ENCODE measurements at regions of chr19 and their contacts with region 1.

Region 1: GRCh38 chr19:39532233-39533002 is at the start of gene EID2B:
- DNase-seq: peak; percentile 94
- ATAC-seq: peak; percentile 96
- H3K4me3 ChIP-seq: peak within 1 kb of the TSS; percentile 98
- H3K27ac ChIP-seq: peak within 1 kb of the TSS; percentile 57
- H3K4me1 ChIP-seq: no peaks in the 10 kb centered on the region
- H3K27me3 ChIP-seq: no peaks in the 10 kb centered on the region
- CTCF ChIP-seq: peak; percentile 100; a peak in 5 of 6 replicates
- EP300 ChIP-seq: no peak
- POLR2A ChIP-seq: peak; percentile 79
- RAD21 ChIP-seq: peak; percentile 88
- polyA plus RNA-seq, gene EID2B: 5.8 to 6.1 TPM

Region 2: GRCh38 chr19:39277612-39278011 is 254.8 kb before region 1 on chr19:
- CTCF ChIA-PET with region 1: no interaction called
- POLR2A ChIA-PET with region 1: no interaction called
- RAD21 ChIA-PET with region 1: no interaction called
- SMC1A ChIA-PET with region 1: no interaction called
- in situ Hi-C with region 1: no loop called
- intact Hi-C with region 1: no loop called
- DNase-seq: no peak
- ATAC-seq: no peak
- H3K4me3 ChIP-seq: no peak overlapping the region
- H3K27ac ChIP-seq: no peak overlapping the region
- H3K4me1 ChIP-seq: no peaks in the 10 kb centered on the region
- H3K27me3 ChIP-seq: peaks cover 0 to 1% of the 10 kb centered on the region in 2 experiments; a peak in 2 of 4 replicates
- CTCF ChIP-seq: no peak
- EP300 ChIP-seq: no peak
- POLR2A ChIP-seq: no peak
- RAD21 ChIP-seq: no peak

Region 3: DNA sequence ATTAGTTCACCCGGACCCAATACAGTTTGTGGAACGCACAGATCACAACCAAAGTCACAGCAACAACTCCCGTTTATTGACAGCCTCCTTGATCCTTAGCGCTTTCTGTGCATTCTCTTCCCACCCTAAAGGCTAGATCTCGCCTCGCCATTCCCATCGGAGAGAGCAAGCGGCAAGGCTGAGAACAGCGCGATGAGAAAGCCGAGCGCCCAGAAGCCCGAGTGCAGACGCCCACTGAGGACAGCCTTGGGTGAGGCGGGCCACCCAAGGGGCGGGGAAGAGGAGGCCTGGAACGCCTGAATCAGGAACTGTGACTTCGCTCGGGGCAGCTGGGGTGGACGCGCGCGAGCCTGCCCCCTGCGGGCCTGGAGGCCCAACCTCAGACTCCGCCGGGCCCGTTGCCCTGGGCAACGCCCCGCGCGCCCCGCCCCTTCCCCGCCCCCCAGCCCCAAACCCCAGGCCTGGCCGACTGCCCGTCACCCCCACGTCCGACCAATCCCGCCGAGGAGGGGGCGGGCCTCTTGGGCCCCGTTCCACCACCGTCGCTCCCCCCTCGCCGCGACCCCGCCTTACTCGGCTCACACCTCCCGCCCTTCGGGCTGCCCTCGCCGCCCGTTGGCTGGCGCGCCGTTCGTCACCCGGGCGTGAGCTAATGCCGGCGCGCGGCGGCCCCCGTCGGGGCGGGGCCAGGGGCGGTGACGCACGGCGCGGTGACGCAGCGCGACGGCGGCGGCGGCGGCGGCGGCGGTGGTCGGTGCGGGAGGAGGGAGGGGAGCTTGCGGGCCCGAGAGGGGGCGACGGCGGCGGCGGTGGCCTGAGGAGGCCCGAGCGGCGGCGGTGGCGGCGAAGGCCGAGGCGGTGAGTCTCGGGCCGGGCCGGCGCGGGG is 190.5 kb before region 1 on chr19 and contains the start of gene SAMD4B:
- CTCF ChIA-PET with region 1: no interaction called
- POLR2A ChIA-PET with region 1: no interaction called
- RAD21 ChIA-PET with region 1: no interaction called
- SMC1A ChIA-PET with region 1: no interaction called
- in situ Hi-C with region 1: no loop called
- intact Hi-C with region 1: loop called (anchors 5 kb)
- DNase-seq: peak; percentile 87
- ATAC-seq: peak; percentile 96
- H3K4me3 ChIP-seq: peak within 1 kb of the TSS; percentile 95
- H3K27ac ChIP-seq: peak within 1 kb of the TSS; percentile 82
- H3K4me1 ChIP-seq: peaks cover 14% of the 10 kb centered on the region
- H3K27me3 ChIP-seq: no peaks in the 10 kb centered on the region
- CTCF ChIP-seq: peak; percentile 57 to 91 (median 65); a peak in 5 of 6 replicates
- EP300 ChIP-seq: no peak
- POLR2A ChIP-seq: peak; percentile 99
- RAD21 ChIP-seq: peak; percentile 2; the same call in 1 of the 2 replicates
- polyA plus RNA-seq, gene SAMD4B: 2.4 to 3.8 TPM

Region 4: DNA sequence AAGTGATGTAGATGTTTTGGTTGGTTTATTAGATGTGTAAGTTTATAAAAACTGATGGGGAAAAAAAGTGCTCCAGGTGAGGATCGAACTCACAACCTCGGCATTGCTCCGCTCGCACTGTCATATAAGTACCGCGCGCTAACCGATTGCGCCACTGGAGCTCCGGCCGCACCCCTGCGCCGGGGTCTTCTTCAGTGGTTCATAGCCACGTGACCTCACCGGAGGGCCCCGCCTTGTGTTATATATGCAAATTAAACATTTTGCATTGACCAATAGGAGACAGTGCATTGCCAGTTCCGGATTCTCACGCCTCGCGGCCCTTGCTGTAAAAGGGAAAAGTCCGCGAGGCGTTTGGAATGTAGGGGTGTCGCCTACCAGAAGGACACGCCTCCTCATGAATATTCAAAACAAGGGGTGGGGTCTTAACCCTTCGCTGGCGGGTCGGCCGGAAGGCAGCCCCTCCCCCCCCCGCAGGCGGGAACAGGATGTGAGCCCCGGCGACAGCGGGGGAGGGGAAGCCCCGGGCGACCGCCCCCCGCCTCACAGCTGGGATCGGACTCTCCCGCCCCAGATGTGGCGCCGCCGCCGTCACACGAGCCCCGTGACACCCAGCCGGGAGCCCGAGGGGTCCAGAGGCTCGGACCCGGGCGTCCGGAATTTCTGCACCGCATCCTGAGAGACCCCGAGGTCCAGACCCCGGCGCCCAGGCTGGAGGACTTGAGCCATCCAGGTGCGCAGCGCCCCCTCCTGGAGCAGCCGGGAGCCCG is 120.1 kb before region 1 on chr19 and contains the start of gene PLEKHG2:
- CTCF ChIA-PET with region 1: interaction called, 6 read pairs
- POLR2A ChIA-PET with region 1: no interaction called
- RAD21 ChIA-PET with region 1: interaction called, 4 read pairs
- SMC1A ChIA-PET with region 1: interaction called, 3 read pairs
- in situ Hi-C with region 1: no loop called
- intact Hi-C with region 1: loop called (anchors 10 kb)
- DNase-seq: peak; percentile 99
- ATAC-seq: peak; percentile 59
- H3K4me3 ChIP-seq: peak within 1 kb of the TSS; percentile 98
- H3K27ac ChIP-seq: peak within 1 kb of the TSS; percentile 100
- H3K4me1 ChIP-seq: peaks cover 15% of the 10 kb centered on the region
- H3K27me3 ChIP-seq: no peaks in the 10 kb centered on the region
- CTCF ChIP-seq: peak in 2 of 3 experiments; percentile 79 to 90
- EP300 ChIP-seq: peak; percentile 26 to 31; a peak in 2 of 4 replicates
- POLR2A ChIP-seq: peak; percentile 87
- RAD21 ChIP-seq: peak; percentile 44
- polyA plus RNA-seq, gene PLEKHG2: 3.0 to 7.2 TPM

Region 5: GRCh38 chr19:39445265-39446111 is 86.9 kb before region 1 on chr19 and contains the start of gene SUPT5H:
- CTCF ChIA-PET with region 1: interaction called, 63 read pairs
- POLR2A ChIA-PET with region 1: interaction called, 5 read pairs
- RAD21 ChIA-PET with region 1: interaction called, 14 read pairs
- SMC1A ChIA-PET with region 1: interaction called, 26 read pairs
- in situ Hi-C with region 1: loop called (anchors 5 kb)
- intact Hi-C with region 1: loop called (anchors 2 kb)
- DNase-seq: peak; percentile 97
- ATAC-seq: peak; percentile 90
- H3K4me3 ChIP-seq: peak within 1 kb of the TSS; percentile 87
- H3K27ac ChIP-seq: peak within 1 kb of the TSS; percentile 95
- H3K4me1 ChIP-seq: peaks cover 28% of the 10 kb centered on the region
- H3K27me3 ChIP-seq: no peaks in the 10 kb centered on the region
- CTCF ChIP-seq: no peak
- EP300 ChIP-seq: peak in 1 of 2 experiments; percentile 25; a peak in 1 of 4 replicates
- POLR2A ChIP-seq: peak; percentile 95
- RAD21 ChIP-seq: no peak
- polyA plus RNA-seq, gene SUPT5H: 27.2 to 75.0 TPM

Region 6: DNA sequence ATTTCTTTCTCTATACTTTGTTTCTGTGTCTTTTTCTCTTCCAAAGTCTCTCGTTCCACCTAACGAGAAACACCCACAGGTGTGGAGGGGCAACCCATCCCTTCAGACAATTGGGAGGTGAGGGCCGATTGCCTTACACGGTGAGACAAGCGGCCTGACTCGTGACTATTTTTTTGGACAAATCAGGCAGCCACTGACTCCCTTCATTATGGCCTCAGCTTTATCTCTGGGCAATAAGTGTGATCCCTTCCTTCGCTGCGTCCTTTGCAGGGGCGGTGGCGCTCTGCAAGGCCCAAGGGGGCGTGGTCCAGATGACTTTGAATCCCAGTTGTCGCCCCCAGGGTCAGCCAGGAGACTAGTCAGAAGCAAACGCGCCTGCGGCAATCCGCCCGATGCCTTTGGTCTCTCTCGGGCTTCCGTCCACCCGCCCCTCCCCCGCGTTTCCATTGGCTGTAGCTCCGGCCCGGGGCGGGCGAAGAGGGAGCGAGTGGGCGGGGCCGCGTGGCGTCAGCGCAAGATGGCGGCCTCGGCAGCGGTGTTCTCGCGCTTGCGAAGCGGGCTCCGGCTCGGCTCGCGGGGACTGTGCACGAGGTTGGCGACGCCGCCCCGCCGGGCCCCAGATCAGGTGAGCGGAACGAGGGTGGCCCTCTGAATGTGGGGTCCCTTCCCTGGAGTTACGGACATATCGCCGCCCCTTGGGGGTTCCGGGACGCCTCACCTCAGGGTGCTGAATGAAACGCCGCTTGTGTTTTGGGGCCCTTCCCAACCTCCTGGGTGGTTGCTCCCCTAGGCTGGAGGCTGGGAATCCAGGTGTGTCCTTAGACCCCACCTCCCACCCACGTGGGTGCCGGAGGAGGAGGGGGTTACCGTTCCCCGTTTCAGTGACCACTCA is 51.8 kb before region 1 on chr19 and contains the start of gene TIMM50:
- CTCF ChIA-PET with region 1: interaction called, 41 read pairs
- POLR2A ChIA-PET with region 1: interaction called, 3 read pairs
- RAD21 ChIA-PET with region 1: interaction called, 3 read pairs
- SMC1A ChIA-PET with region 1: no interaction called
- in situ Hi-C with region 1: loop called (anchors 5 kb)
- intact Hi-C with region 1: no loop called
- DNase-seq: peak; percentile 69
- ATAC-seq: peak; percentile 97
- H3K4me3 ChIP-seq: peak within 1 kb of the TSS; percentile 87
- H3K27ac ChIP-seq: peak within 1 kb of the TSS; percentile 91
- H3K4me1 ChIP-seq: peaks cover 6% of the 10 kb centered on the region
- H3K27me3 ChIP-seq: no peaks in the 10 kb centered on the region
- CTCF ChIP-seq: no peak
- EP300 ChIP-seq: no peak
- POLR2A ChIP-seq: peak; percentile 95
- RAD21 ChIP-seq: no peak
- polyA plus RNA-seq, gene TIMM50: 15.6 to 34.7 TPM

Region 7: DNA sequence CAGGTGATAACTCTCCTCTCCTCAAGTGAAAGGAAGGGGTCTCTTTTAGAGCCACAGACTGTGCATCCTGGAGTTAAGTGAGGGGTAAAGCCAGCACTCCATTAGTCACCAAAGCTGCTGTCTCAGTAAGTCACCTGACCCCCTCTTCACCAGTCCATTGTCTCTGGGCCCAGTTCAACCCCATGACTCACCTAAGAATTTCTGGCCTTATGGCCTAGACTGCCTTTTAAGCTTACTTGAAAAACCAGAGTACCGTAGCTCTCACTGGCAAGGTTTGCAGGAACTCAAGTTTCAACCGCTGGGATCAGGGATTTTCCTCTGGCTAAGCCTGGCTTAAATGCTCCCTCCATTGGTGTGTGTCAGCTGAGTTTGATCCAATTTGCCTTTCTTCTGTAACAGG is 31.0 kb after region 1 on chr19:
- CTCF ChIA-PET with region 1: no interaction called
- POLR2A ChIA-PET with region 1: no interaction called
- RAD21 ChIA-PET with region 1: no interaction called
- SMC1A ChIA-PET with region 1: no interaction called
- in situ Hi-C with region 1: no loop called
- intact Hi-C with region 1: no loop called
- DNase-seq: no peak
- ATAC-seq: no peak
- H3K4me3 ChIP-seq: no peak overlapping the region
- H3K27ac ChIP-seq: no peak overlapping the region
- H3K4me1 ChIP-seq: peaks cover 11% of the 10 kb centered on the region
- H3K27me3 ChIP-seq: no peaks in the 10 kb centered on the region
- CTCF ChIP-seq: no peak
- EP300 ChIP-seq: no peak
- POLR2A ChIP-seq: no peak
- RAD21 ChIP-seq: no peak

Region 8: DNA sequence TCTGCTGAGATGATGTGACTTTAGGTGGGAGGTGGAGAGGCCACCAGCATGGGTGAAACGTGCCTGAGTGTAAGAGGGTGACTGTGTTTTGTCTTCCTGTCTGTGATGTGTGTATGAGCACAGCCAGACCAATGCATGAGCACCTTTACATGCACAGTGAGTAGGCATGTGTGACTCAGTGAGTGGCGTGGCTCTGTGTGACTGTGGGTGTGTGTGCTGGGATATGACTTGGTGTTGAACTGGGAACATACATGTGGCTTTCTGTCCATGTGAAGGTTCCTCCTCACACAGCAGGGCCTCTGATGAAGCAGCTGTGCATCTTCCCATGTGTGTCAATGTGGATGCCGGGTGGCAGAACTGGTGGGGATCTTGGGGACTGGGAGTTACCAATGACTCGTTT is 50.0 kb after region 1 on chr19:
- CTCF ChIA-PET with region 1: no interaction called
- POLR2A ChIA-PET with region 1: no interaction called
- RAD21 ChIA-PET with region 1: no interaction called
- SMC1A ChIA-PET with region 1: no interaction called
- in situ Hi-C with region 1: no loop called
- intact Hi-C with region 1: no loop called
- DNase-seq: no peak
- ATAC-seq: no peak
- H3K4me3 ChIP-seq: no peak overlapping the region
- H3K27ac ChIP-seq: peak overlapping the region; percentile 48
- H3K4me1 ChIP-seq: peaks cover 13% of the 10 kb centered on the region
- H3K27me3 ChIP-seq: no peaks in the 10 kb centered on the region
- CTCF ChIP-seq: no peak
- EP300 ChIP-seq: no peak
- POLR2A ChIP-seq: no peak
- RAD21 ChIP-seq: no peak